B cell (primary cell): ENCODE measurements at regions of chr18 and their contacts with region 1.

Region 1: GRCh38 chr18:32072321-32072720 is 19.4 kb upstream of the RNF138 start:
- DNase-seq: peak; percentile 45
- ATAC-seq: no peak
- H3K4me3 ChIP-seq: no peak overlapping the region
- H3K4me3 Mint-ChIP-seq: no peak overlapping the region
- H3K27ac ChIP-seq: no peak overlapping the region
- H3K27ac Mint-ChIP-seq: no peak overlapping the region
- H3K4me1 ChIP-seq: no peaks in the 10 kb centered on the region
- H3K4me1 Mint-ChIP-seq: no peaks in the 10 kb centered on the region
- H3K27me3 ChIP-seq: no peaks in the 10 kb centered on the region
- H3K27me3 Mint-ChIP-seq: no peaks in the 10 kb centered on the region
- CTCF ChIP-seq: peak; percentile 71

Region 2: GRCh38 chr18:31741097-31741735 is 331.1 kb before region 1 on chr18:
- CTCF ChIA-PET with region 1: interaction called, 3 read pairs
- POLR2A ChIA-PET with region 1: no interaction called
- intact Hi-C with region 1: loop called (anchors 5 kb)
- DNase-seq: peak; percentile 61
- ATAC-seq: no peak
- H3K4me3 ChIP-seq: no peak overlapping the region
- H3K4me3 Mint-ChIP-seq: no peak overlapping the region
- H3K27ac ChIP-seq: no peak overlapping the region
- H3K27ac Mint-ChIP-seq: no peak overlapping the region
- H3K4me1 ChIP-seq: no peaks in the 10 kb centered on the region
- H3K4me1 Mint-ChIP-seq: no peaks in the 10 kb centered on the region
- H3K27me3 ChIP-seq: no peaks in the 10 kb centered on the region
- H3K27me3 Mint-ChIP-seq: no peaks in the 10 kb centered on the region
- CTCF ChIP-seq: peak; percentile 95

Region 3: DNA sequence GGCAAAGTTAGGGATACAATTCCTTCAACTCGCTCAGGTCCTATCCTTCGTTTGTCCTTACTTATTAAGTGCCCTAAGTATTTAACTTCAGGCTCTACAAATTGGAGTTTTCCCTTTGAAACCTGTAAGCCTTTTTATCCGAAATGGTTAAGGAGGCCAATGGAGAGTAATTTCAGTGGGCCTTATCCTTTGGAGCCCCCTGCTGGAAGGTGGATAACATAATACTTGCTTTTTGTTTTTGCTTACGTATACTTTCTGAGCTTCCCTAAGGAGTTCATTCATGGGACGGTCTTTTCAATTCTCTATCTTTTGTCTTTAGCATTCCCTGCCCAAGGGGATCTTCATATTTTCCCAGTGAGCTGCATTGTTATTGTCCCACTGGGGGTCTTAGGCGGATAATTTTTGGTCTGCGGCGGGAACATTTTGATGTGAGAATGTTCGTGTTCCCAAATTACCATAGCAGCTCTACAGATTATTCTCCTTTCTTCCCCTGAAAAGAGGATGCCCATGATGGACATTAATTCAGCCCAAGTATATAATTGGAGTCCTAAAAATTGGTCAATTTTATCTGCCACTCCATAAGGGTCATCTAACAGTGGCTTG is 95.0 kb before region 1 on chr18:
- CTCF ChIA-PET with region 1: interaction called, 12 read pairs
- POLR2A ChIA-PET with region 1: no interaction called
- intact Hi-C with region 1: no loop called
- DNase-seq: peak; percentile 61
- ATAC-seq: no peak
- H3K4me3 ChIP-seq: no peak overlapping the region
- H3K4me3 Mint-ChIP-seq: no peak overlapping the region
- H3K27ac ChIP-seq: no peak overlapping the region
- H3K27ac Mint-ChIP-seq: no peak overlapping the region
- H3K4me1 ChIP-seq: no peaks in the 10 kb centered on the region
- H3K4me1 Mint-ChIP-seq: no peaks in the 10 kb centered on the region
- H3K27me3 ChIP-seq: no peaks in the 10 kb centered on the region
- H3K27me3 Mint-ChIP-seq: no peaks in the 10 kb centered on the region
- CTCF ChIP-seq: peak; percentile 76

Region 4: GRCh38 chr18:32048507-32049091 is 23.7 kb before region 1 on chr18:
- CTCF ChIA-PET with region 1: interaction called, 5 read pairs
- POLR2A ChIA-PET with region 1: interaction called, 10 read pairs
- intact Hi-C with region 1: no loop called
- DNase-seq: peak; percentile 53
- ATAC-seq: peak; percentile 33
- H3K4me3 ChIP-seq: no peak overlapping the region
- H3K4me3 Mint-ChIP-seq: peak overlapping the region; percentile 27
- H3K27ac ChIP-seq: peak overlapping the region; percentile 77 to 81
- H3K27ac Mint-ChIP-seq: peak overlapping the region; percentile 71
- H3K4me1 ChIP-seq: peaks cover 19% of the 10 kb centered on the region in 2 donors
- H3K4me1 Mint-ChIP-seq: peaks cover 25% of the 10 kb centered on the region
- H3K27me3 ChIP-seq: no peaks in the 10 kb centered on the region
- H3K27me3 Mint-ChIP-seq: no peaks in the 10 kb centered on the region
- CTCF ChIP-seq: no peak

Region 5: GRCh38 chr18:32083781-32084180 is 11.5 kb after region 1 on chr18:
- CTCF ChIA-PET with region 1: interaction called, 11 read pairs
- POLR2A ChIA-PET with region 1: no interaction called
- intact Hi-C with region 1: no loop called
- DNase-seq: no peak
- ATAC-seq: no peak
- H3K4me3 ChIP-seq: no peak overlapping the region
- H3K4me3 Mint-ChIP-seq: no peak overlapping the region
- H3K27ac ChIP-seq: no peak overlapping the region
- H3K27ac Mint-ChIP-seq: peak overlapping the region; percentile 78
- H3K4me1 ChIP-seq: peaks cover 11 to 25% of the 10 kb centered on the region in 2 donors
- H3K4me1 Mint-ChIP-seq: peaks cover 16% of the 10 kb centered on the region
- H3K27me3 ChIP-seq: no peaks in the 10 kb centered on the region
- H3K27me3 Mint-ChIP-seq: no peaks in the 10 kb centered on the region
- CTCF ChIP-seq: no peak

Region 6: DNA sequence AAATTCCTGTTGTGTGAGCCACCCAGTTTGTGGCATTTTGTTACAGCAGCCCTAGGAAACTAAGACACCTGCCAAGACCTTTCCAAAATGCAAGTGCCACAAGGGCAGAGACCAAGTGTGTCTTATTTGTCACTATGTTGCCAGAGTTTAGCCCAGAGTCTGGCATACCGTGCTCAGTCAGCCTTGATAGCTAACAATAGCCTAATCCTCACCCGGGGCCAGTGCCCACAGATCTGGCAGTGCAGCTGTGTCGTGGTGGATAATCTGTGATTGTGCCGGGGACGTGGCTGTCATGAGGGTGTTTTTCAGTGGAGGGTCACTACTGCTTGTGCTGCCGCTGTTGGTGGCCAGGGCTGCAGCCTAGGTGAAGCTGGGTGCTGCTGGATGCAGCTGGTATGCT is 171.0 kb after region 1 on chr18:
- CTCF ChIA-PET with region 1: no interaction called
- POLR2A ChIA-PET with region 1: no interaction called
- intact Hi-C with region 1: no loop called
- DNase-seq: no peak
- ATAC-seq: no peak
- H3K4me3 ChIP-seq: no peak overlapping the region
- H3K4me3 Mint-ChIP-seq: no peak overlapping the region
- H3K27ac ChIP-seq: no peak overlapping the region
- H3K27ac Mint-ChIP-seq: no peak overlapping the region
- H3K4me1 ChIP-seq: no peaks in the 10 kb centered on the region
- H3K4me1 Mint-ChIP-seq: no peaks in the 10 kb centered on the region
- H3K27me3 ChIP-seq: peaks cover 0 to 3% (median 0%) of the 10 kb centered on the region in 4 experiments
- H3K27me3 Mint-ChIP-seq: peaks cover 6% of the 10 kb centered on the region
- CTCF ChIP-seq: no peak